Pancreas (tissue), 10 donors: ENCODE measurements at regions of chr4 and their contacts with region 1.

Region 1: DNA sequence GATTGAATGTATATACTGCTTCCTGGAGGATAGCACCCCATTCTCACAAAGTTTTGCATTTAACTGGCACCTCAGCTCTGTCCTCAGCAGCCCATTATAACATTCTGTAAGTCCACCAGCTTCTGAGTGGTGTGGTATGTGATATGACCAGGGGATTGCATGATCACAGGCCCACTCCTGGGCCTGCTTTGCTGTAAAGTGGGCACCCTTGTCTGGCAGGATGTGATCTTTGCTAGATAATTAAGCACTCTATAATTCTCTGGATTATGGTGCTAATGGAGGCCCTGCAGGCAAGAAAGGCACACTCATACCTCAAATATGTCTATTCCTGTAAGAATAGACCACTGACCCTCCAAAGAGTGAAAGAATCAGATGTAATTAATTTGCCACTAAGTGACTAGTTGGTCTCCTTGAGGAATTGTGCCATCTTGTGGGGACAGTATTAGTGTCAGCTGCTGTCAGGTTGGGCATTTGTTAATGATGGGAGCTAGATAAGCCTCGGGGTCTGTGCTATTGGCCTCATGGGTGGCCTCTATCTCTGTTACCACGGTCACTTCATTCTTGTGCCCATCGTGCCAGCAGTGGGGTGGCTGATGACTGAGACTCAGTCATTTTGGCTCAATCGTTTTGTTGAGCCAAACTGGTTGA is 2.2 kb upstream of the CFI start:
- DNase-seq: peak in 1 of 6 donors; percentile 22
- ATAC-seq: peak; percentile 54 to 81 (median 75)
- H3K4me3 ChIP-seq: no peak overlapping the region
- H3K27ac ChIP-seq: no peak overlapping the region
- H3K4me1 ChIP-seq: peaks cover 0 to 18% (median 15%) of the 10 kb centered on the region in 3 donors
- H3K27me3 ChIP-seq: no peaks in the 10 kb centered on the region
- CTCF ChIP-seq: peak in 2 of 4 donors; percentile 32 to 33

Region 2: GRCh38 chr4:109690690-109691410 is 113.2 kb before region 1 on chr4:
- intact Hi-C with region 1: loop called in 1 of 3 experiments (anchors 10 kb)
- DNase-seq: no peak
- ATAC-seq: no peak
- H3K4me3 ChIP-seq: no peak overlapping the region
- H3K27ac ChIP-seq: no peak overlapping the region
- H3K4me1 ChIP-seq: no peaks in the 10 kb centered on the region
- H3K27me3 ChIP-seq: no peaks in the 10 kb centered on the region
- CTCF ChIP-seq: no peak

Region 3: GRCh38 chr4:109702950-109703663 is 100.9 kb before region 1 on chr4 and contains the start of gene CASP6:
- intact Hi-C with region 1: loop called in 2 of 3 experiments (anchors 10 kb)
- DNase-seq: peak; percentile 87 to 93 (median 91)
- ATAC-seq: peak; percentile 91 to 95 (median 92)
- H3K4me3 ChIP-seq: peak within 1 kb of the TSS; percentile 53 to 80 (median 68)
- H3K27ac ChIP-seq: peak within 1 kb of the TSS; percentile 59 to 95 (median 90)
- H3K4me1 ChIP-seq: peaks cover 6 to 11% (median 7%) of the 10 kb centered on the region in 3 donors
- H3K27me3 ChIP-seq: no peaks in the 10 kb centered on the region
- CTCF ChIP-seq: peak; percentile 52 to 68 (median 56)
- total RNA-seq, gene CASP6: 6.4 to 18.6 (median 10.1) TPM

Region 4: DNA sequence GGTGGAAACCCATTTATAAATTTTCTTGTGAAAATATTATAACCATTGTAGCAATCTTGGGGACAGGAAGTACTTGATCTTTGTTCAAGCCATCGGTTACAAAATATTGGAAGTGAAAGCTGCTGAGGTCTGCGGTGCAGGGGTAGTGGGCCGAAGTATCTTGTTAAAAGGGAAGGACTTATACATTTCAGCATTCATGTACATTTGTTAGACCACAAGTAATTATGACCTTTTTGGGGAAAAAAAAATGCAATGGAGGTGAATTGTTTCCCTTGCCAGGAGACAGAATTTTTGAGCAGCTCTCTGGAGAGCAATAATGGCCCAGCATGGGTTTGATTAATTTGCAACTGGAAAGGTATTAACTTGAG is 230.0 kb after region 1 on chr4:
- intact Hi-C with region 1: no loop called
- DNase-seq: no peak
- ATAC-seq: peak in 1 of 4 donors; percentile 46
- H3K4me3 ChIP-seq: no peak overlapping the region
- H3K27ac ChIP-seq: no peak overlapping the region
- H3K4me1 ChIP-seq: no peaks in the 10 kb centered on the region
- H3K27me3 ChIP-seq: no peaks in the 10 kb centered on the region
- CTCF ChIP-seq: no peak